Activated CD4-positive, alpha-beta T cell treated with anti-CD3 and anti-CD28 coated beads for 36 hours (primary cell): ENCODE measurements at regions of chrX and their contacts with region 1.

Region 1: GRCh38 chrX:130339408-130340222 is at the start of gene SLC25A14:
- DNase-seq: peak; percentile 82
- ATAC-seq: peak; percentile 88
- H3K4me3 Mint-ChIP-seq: peak within 1 kb of the TSS; percentile 87
- H3K27ac Mint-ChIP-seq: peak within 1 kb of the TSS; percentile 94
- H3K4me1 Mint-ChIP-seq: peaks cover 14% of the 10 kb centered on the region
- H3K27me3 Mint-ChIP-seq: no peaks in the 10 kb centered on the region
- total RNA-seq, gene SLC25A14: 9.6 to 11.0 TPM

Region 2: DNA sequence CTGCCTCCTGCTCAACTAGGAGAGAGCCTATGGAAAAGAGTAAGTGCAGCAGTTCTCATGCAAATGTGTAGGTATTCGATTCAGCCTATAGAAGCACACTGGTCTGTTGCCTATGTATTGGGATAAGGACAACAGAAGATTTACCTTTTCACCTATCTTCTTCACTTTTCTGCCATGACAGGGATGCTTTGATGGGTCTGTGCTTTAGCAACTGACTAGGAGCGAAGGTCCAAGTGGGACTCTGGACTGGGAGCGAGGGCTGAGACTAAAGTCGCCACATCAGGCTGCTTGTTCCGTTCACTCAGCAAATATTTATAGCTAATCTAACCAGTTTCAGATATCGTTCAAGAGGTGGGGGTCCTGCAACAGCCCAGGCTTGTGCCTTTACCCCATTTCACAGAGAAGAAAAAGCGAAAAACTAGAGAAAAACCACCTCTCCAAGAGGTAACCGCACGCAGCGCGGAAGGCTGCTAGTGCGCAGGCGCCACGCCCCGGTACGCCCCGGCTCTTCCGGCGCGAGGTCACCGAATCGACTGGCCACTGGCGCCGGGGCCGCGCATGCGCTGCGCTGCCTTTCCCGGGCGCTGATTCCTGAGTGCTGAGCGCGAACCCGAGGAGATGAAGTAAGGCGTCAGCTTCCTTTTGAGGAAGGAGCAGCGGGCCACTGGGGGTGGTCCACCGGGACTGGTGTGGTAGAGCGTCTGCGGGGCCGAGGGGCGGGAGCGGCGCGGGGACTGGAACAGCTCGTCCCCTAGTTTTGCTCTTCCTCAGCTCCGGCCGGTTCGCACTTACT is 62.0 kb after region 1 on chrX and contains the start of gene RBMX2:
- CTCF ChIA-PET with region 1: no interaction called
- POLR2A ChIA-PET with region 1: no interaction called
- intact Hi-C with region 1: loop called (anchors 1 to 10 kb)
- DNase-seq: peak; percentile 79
- ATAC-seq: peak; percentile 93
- H3K4me3 Mint-ChIP-seq: peak within 1 kb of the TSS; percentile 93
- H3K27ac Mint-ChIP-seq: peak within 1 kb of the TSS; percentile 92
- H3K4me1 Mint-ChIP-seq: peaks cover 13% of the 10 kb centered on the region
- H3K27me3 Mint-ChIP-seq: peaks cover under 1% of the 10 kb centered on the region
- total RNA-seq, gene RBMX2: 25.4 to 26.8 TPM

Region 3: GRCh38 chrX:131812836-131813825 is 1473.5 kb after region 1 on chrX:
- CTCF ChIA-PET with region 1: no interaction called
- POLR2A ChIA-PET with region 1: no interaction called
- intact Hi-C with region 1: loop called in 1 of 2 experiments (anchors 5 kb)
- DNase-seq: peak; percentile 70
- ATAC-seq: peak; percentile 89
- H3K4me3 Mint-ChIP-seq: peak overlapping the region; percentile 67
- H3K27ac Mint-ChIP-seq: peak overlapping the region; percentile 86
- H3K4me1 Mint-ChIP-seq: peaks cover 29% of the 10 kb centered on the region
- H3K27me3 Mint-ChIP-seq: no peaks in the 10 kb centered on the region